Ascending aorta (tissue), 2 donors: ENCODE measurements at regions of chr11 and their contacts with region 1.

Region 1: DNA sequence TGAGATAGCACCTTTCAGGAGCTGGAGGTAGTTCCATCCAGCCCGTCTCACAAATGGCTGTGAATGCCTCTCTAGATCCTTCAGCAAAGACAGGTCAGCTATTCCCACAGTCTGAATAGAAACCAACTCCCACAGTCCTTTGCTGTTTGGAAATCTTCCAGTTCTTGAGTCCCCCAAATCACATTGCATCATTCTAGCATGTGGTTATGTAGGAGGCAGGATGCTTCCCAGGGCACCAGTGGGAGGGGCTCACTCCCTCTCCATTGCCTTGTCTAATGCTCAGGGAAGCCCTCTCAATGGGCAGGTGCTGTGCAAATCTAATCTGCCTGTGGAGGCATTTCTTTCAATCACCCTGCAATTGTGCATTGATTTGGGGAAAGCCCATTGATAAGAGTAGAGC is 14.6 kb downstream of the NAV2 start:
- DNase-seq: no peak
- H3K4me3 ChIP-seq: no peak overlapping the region
- H3K27ac ChIP-seq: peak overlapping the region; percentile 97 to 98
- H3K4me1 ChIP-seq: peaks cover 47 to 90% of the 10 kb centered on the region in 2 donors
- H3K27me3 ChIP-seq: no peaks in the 10 kb centered on the region
- CTCF ChIP-seq: no peak

Region 2: GRCh38 chr11:19018901-19019300 is 708.3 kb before region 1 on chr11:
- intact Hi-C with region 1: no loop called
- DNase-seq: no peak
- H3K4me3 ChIP-seq: no peak overlapping the region
- H3K27ac ChIP-seq: no peak overlapping the region
- H3K4me1 ChIP-seq: no peaks in the 10 kb centered on the region
- H3K27me3 ChIP-seq: no peaks in the 10 kb centered on the region
- CTCF ChIP-seq: no peak

Region 3: DNA sequence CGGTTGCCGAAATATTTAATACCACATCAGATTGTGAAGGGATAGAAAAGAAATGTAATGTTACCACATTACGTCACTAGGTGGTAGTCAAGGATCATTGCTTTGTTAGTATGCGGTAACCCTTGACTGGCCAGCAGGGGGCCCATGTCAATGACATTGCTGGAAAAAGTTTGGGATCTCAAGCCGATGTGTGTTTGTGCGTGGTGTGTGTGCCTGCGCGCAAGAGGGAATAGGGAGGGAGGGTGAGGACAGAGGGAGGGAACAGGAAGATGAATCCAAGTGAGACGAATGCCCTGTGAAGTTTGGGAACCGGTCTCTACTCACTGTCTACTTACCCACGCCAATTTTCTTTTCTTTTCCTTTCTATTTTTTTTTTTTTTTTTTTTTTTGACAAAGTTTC is 656.0 kb before region 1 on chr11:
- intact Hi-C with region 1: no loop called
- DNase-seq: peak; percentile 12 to 68
- H3K4me3 ChIP-seq: peak overlapping the region in 1 of 2 donors; percentile 38
- H3K27ac ChIP-seq: no peak overlapping the region
- H3K4me1 ChIP-seq: no peaks in the 10 kb centered on the region
- H3K27me3 ChIP-seq: no peaks in the 10 kb centered on the region
- CTCF ChIP-seq: peak; percentile 69 to 83 (median 77)

Region 4: GRCh38 chr11:19577976-19578619 is 149.1 kb before region 1 on chr11:
- intact Hi-C with region 1: loop called (anchors 5 kb)
- DNase-seq: peak in 1 of 2 donors; percentile 91
- H3K4me3 ChIP-seq: peak overlapping the region in 1 of 2 donors; percentile 52
- H3K27ac ChIP-seq: peak overlapping the region; percentile 93 to 98
- H3K4me1 ChIP-seq: peaks cover 43 to 72% of the 10 kb centered on the region in 2 donors
- H3K27me3 ChIP-seq: no peaks in the 10 kb centered on the region
- CTCF ChIP-seq: peak in 1 of 3 experiments; percentile 29

Region 5: DNA sequence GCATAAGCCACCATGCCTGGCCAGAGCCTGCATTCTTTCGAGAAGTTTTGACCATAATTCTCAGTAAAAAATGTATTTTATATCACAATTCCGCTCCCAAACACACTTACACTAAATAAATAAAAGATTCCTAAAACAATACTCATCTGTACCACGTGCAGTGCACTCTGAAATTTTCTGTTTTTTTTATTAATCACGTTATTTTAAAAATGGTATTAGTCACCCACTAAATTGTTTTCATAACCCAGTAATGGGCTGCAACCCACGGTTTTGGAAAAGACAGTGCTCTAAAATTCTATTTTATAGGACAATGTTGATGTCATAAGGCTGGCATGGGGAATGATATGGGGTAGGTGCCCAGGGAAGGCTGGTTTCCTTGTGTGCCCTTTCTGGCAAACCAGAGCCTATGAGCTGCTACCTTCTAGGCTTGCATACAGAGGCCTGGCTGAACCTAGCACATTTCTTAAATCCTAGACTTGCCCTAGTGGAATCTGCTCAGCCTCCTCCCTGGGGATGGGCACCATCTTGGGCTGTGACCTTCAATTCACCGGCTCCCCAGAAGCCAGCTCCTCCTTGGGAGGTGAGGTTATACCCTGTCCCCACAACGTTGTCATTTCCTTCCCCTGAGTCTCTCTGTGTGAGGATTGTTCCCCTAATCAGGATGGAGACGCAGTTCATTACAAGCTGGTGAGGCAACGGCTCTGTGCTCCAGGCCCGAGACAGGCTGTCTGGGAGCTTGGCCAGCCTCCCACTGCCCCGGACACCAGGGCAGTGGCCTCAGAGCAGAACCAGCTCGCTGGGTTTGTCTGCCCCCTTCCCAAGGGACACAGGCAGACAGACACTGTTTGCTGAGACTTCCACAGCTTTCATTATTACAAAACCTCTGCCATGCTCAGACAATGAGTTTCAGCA is 131.2 kb before region 1 on chr11:
- intact Hi-C with region 1: loop called (anchors 5 kb)
- DNase-seq: peak; percentile 64 to 95
- H3K4me3 ChIP-seq: peak overlapping the region in 1 of 2 donors; percentile 60
- H3K27ac ChIP-seq: peak overlapping the region; percentile 82 to 93
- H3K4me1 ChIP-seq: peaks cover 18 to 46% of the 10 kb centered on the region in 2 donors
- H3K27me3 ChIP-seq: no peaks in the 10 kb centered on the region
- CTCF ChIP-seq: no peak

Region 6: GRCh38 chr11:19633276-19633675 is 94.0 kb before region 1 on chr11:
- intact Hi-C with region 1: loop called (anchors 5 kb)
- DNase-seq: peak; percentile 65 to 91
- H3K4me3 ChIP-seq: peak overlapping the region in 1 of 2 donors; percentile 23
- H3K27ac ChIP-seq: peak overlapping the region; percentile 89 to 90
- H3K4me1 ChIP-seq: peaks cover 21 to 46% of the 10 kb centered on the region in 2 donors
- H3K27me3 ChIP-seq: no peaks in the 10 kb centered on the region
- CTCF ChIP-seq: no peak

Region 7: DNA sequence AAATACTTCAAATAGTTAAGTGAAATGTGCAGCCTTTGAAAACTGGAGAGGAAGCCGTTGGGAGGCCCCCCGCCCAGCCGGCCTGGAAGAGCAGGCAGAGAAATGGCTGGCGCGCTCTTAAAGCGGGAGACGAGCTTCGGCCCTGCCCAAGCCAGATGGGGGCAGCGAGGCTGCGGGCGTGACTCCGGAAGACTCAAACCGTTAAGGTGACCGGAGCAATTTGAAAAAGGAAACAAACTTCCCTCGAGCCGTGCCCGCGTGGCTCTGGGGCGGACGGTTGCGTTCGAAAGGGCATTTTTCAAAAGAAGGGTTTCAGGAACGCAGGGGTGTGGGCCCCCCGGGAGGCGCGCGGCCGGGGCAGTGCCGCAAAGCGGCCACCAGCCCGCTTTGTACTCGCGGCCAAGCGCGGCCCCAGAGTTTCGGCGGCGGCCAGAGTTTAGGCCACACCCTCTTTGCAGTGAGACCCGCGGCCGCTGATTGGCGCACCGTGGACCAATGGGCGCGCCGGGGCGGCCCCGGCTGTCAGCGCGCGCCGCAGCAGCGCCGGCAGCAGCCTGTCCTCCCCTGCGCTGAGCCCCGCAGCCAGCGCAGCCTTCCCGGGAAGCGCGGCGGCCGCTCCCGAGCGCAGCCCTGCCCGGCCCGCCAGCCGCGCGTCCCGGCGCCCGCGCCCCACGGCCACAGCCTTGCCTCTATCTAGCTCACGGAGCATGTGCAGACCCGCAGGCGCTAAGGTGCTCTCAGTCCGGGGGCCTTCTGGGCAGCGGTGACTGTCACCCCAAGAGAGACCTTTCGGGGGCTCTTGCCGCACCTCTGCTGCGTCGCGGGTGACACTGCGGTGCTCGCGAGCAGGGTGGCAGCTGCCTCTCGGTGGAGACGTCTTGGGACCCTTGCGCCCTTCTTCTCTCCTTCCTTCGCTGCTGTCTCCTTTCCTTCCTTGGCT is 14.7 kb before region 1 on chr11 and contains the start of gene NAV2:
- intact Hi-C with region 1: loop called (anchors 1 kb)
- DNase-seq: peak; percentile 80 to 95
- H3K4me3 ChIP-seq: peak within 1 kb of the TSS; percentile 92 to 98
- H3K27ac ChIP-seq: peak within 1 kb of the TSS; percentile 97 to 98
- H3K4me1 ChIP-seq: peaks cover 0 to 16% of the 10 kb centered on the region in 2 donors
- H3K27me3 ChIP-seq: no peaks in the 10 kb centered on the region
- CTCF ChIP-seq: peak in 1 of 3 experiments; percentile 9
- total RNA-seq, gene NAV2: 62.6 TPM